ENCODE measurements at regions of chr15 and their contacts with region 1.

Region 1: GRCh38 chr15:73856458-73857192 is 16.7 kb upstream of the TBC1D21 start:
- DNase-seq: no peak
- H3K4me3 ChIP-seq: no peak overlapping the region
- H3K27ac ChIP-seq: no peak overlapping the region
- H3K4me1 ChIP-seq: no peaks in the 10 kb centered on the region
- H3K27me3 ChIP-seq: peaks cover 87% of the 10 kb centered on the region
- CTCF ChIP-seq: no peak

Region 2: GRCh38 chr15:73457334-73457733 is 399.3 kb before region 1 on chr15:
- CTCF ChIA-PET with region 1: no interaction called
- POLR2A ChIA-PET with region 1: no interaction called
- intact Hi-C with region 1: no loop called
- DNase-seq: no peak
- H3K4me3 ChIP-seq: no peak overlapping the region
- H3K27ac ChIP-seq: no peak overlapping the region
- H3K4me1 ChIP-seq: no peaks in the 10 kb centered on the region
- H3K27me3 ChIP-seq: no peaks in the 10 kb centered on the region
- CTCF ChIP-seq: no peak

Region 3: DNA sequence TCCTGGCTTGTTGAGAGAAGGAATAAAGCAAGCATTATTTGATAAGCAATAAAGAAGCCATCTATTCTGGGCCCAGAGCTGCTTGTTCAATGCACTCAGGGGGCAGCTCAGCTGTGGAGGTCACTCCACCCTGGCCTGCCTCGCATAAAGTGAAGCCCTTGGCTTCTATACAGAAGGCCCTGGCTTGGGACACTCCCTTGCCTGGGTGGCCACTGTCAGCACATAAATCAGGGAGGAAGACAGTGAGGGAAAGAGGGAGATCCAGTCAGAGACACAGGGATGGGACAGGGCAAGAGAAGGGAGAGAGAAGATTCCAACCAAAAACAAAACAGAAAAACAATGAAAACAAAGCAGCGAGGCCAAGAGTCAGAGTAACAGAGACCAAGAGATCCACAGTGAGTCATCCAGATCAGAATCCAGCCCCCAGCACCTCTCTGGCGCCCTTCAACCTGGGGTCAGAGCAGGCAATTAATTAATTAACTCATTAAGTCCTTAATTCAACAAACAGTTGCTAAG is 115.2 kb before region 1 on chr15:
- CTCF ChIA-PET with region 1: no interaction called
- POLR2A ChIA-PET with region 1: interaction called, 15 read pairs
- intact Hi-C with region 1: no loop called
- DNase-seq: no peak
- H3K4me3 ChIP-seq: no peak overlapping the region
- H3K27ac ChIP-seq: no peak overlapping the region
- H3K4me1 ChIP-seq: peaks cover 7% of the 10 kb centered on the region; the same call in 1 of the 2 replicates
- H3K27me3 ChIP-seq: 0 out of 2 replicates have a peak, but pooled peaks cover 3% of the 10 kb centered on the region
- CTCF ChIP-seq: no peak

Region 4: GRCh38 chr15:73781038-73781925 is 75.3 kb before region 1 on chr15:
- CTCF ChIA-PET with region 1: interaction called, 13 read pairs
- POLR2A ChIA-PET with region 1: no interaction called
- intact Hi-C with region 1: no loop called
- DNase-seq: peak in 1 of 2 experiments; percentile 8
- H3K4me3 ChIP-seq: no peak overlapping the region
- H3K27ac ChIP-seq: no peak overlapping the region
- H3K4me1 ChIP-seq: no peaks in the 10 kb centered on the region
- H3K27me3 ChIP-seq: peaks cover 5% of the 10 kb centered on the region; the same call in 1 of the 2 replicates
- CTCF ChIP-seq: peak; percentile 52; the same call in 1 of the 2 replicates

Region 5: GRCh38 chr15:73924171-73924921 is 67.7 kb after region 1 on chr15:
- CTCF ChIA-PET with region 1: no interaction called
- POLR2A ChIA-PET with region 1: no interaction called
- intact Hi-C with region 1: no loop called
- DNase-seq: peak; percentile 33 to 74
- H3K4me3 ChIP-seq: no peak overlapping the region
- H3K27ac ChIP-seq: peak overlapping the region; percentile 30
- H3K4me1 ChIP-seq: peaks cover 43% of the 10 kb centered on the region
- H3K27me3 ChIP-seq: no peaks in the 10 kb centered on the region
- CTCF ChIP-seq: no peak

Measured in PC-9 (cell line).